Ovary (tissue), 10 donors: ENCODE measurements at regions of chr9 and their contacts with region 1.

Region 1: GRCh38 chr9:32968101-32969011 is 33.1 kb downstream of the APTX start:
- DNase-seq: peak; percentile 41 to 72 (median 67)
- H3K4me3 ChIP-seq: no peak overlapping the region
- H3K27ac ChIP-seq: no peak overlapping the region
- H3K4me1 ChIP-seq: peaks cover 3% of the 10 kb centered on the region
- H3K27me3 ChIP-seq: no peaks in the 10 kb centered on the region
- CTCF ChIP-seq: peak; percentile 70 to 79 (median 70)
- EP300 ChIP-seq: no peak
- POLR2A ChIP-seq: no peak

Region 2: GRCh38 chr9:32378993-32379729 is 589.2 kb before region 1 on chr9:
- intact Hi-C with region 1: loop called (anchors 5 kb)
- DNase-seq: peak in 3 of 5 donors; percentile 35 to 59 (median 41)
- H3K4me3 ChIP-seq: no peak overlapping the region
- H3K27ac ChIP-seq: no peak overlapping the region
- H3K4me1 ChIP-seq: peaks cover 1% of the 10 kb centered on the region
- H3K27me3 ChIP-seq: no peaks in the 10 kb centered on the region
- CTCF ChIP-seq: peak; percentile 53 to 87 (median 82)
- EP300 ChIP-seq: no peak
- POLR2A ChIP-seq: no peak

Region 3: GRCh38 chr9:32384364-32385151 is 583.8 kb before region 1 on chr9 and contains the start of gene ACO1:
- intact Hi-C with region 1: loop called (anchors 5 kb)
- DNase-seq: peak; percentile 89 to 95 (median 94)
- H3K4me3 ChIP-seq: peak within 1 kb of the TSS; percentile 90
- H3K27ac ChIP-seq: peak within 1 kb of the TSS; percentile 47 to 71
- H3K4me1 ChIP-seq: peaks cover 8% of the 10 kb centered on the region
- H3K27me3 ChIP-seq: no peaks in the 10 kb centered on the region
- CTCF ChIP-seq: no peak
- EP300 ChIP-seq: no peak
- POLR2A ChIP-seq: peak; percentile 83
- total RNA-seq, gene ACO1: 21.8 to 46.3 (median 30.5) TPM

Region 4: DNA sequence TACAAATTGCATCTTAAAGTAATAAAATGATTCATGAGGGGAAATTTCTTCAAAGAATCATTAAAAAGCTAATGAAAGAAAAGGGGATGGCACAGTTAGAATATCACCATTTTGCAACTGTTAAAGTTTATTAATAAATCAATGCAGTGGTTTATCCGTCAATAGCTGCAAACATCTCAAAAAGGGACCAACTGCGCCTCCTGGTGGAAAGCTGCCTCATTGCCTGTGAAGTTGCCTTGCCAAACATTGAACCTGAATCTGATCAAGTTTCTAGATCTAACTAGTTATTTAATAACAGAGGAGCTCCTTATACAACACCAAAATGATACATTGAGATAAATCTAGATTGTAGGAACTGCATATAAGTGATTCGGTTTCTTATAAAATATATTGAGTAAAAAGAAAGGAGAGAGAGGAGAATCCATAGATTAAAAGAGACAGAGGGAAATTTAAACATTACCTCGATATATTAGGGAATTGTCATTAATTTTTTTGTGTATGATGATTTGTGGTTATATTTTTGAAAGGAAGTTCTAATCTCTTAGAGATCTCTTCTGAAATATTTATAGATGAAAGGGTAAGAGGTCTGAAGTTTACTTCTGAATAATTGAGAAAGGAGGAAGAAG is 388.5 kb before region 1 on chr9:
- intact Hi-C with region 1: loop called (anchors 5 to 10 kb)
- DNase-seq: peak; percentile 48 to 77 (median 76)
- H3K4me3 ChIP-seq: no peak overlapping the region
- H3K27ac ChIP-seq: no peak overlapping the region
- H3K4me1 ChIP-seq: no peaks in the 10 kb centered on the region
- H3K27me3 ChIP-seq: no peaks in the 10 kb centered on the region
- CTCF ChIP-seq: peak; percentile 49 to 76 (median 76)
- EP300 ChIP-seq: no peak
- POLR2A ChIP-seq: no peak

Region 5: GRCh38 chr9:32589083-32589723 is 379.2 kb before region 1 on chr9:
- intact Hi-C with region 1: loop called (anchors 5 to 10 kb)
- DNase-seq: no peak
- H3K4me3 ChIP-seq: no peak overlapping the region
- H3K27ac ChIP-seq: no peak overlapping the region
- H3K4me1 ChIP-seq: no peaks in the 10 kb centered on the region
- H3K27me3 ChIP-seq: no peaks in the 10 kb centered on the region
- CTCF ChIP-seq: peak in 1 of 3 donors; percentile 13
- EP300 ChIP-seq: no peak
- POLR2A ChIP-seq: no peak

Region 6: GRCh38 chr9:32906213-32906612 is 62.1 kb before region 1 on chr9:
- intact Hi-C with region 1: no loop called
- DNase-seq: no peak
- H3K4me3 ChIP-seq: no peak overlapping the region
- H3K27ac ChIP-seq: no peak overlapping the region
- H3K4me1 ChIP-seq: no peaks in the 10 kb centered on the region
- H3K27me3 ChIP-seq: no peaks in the 10 kb centered on the region
- CTCF ChIP-seq: no peak
- EP300 ChIP-seq: no peak
- POLR2A ChIP-seq: no peak

Region 7: DNA sequence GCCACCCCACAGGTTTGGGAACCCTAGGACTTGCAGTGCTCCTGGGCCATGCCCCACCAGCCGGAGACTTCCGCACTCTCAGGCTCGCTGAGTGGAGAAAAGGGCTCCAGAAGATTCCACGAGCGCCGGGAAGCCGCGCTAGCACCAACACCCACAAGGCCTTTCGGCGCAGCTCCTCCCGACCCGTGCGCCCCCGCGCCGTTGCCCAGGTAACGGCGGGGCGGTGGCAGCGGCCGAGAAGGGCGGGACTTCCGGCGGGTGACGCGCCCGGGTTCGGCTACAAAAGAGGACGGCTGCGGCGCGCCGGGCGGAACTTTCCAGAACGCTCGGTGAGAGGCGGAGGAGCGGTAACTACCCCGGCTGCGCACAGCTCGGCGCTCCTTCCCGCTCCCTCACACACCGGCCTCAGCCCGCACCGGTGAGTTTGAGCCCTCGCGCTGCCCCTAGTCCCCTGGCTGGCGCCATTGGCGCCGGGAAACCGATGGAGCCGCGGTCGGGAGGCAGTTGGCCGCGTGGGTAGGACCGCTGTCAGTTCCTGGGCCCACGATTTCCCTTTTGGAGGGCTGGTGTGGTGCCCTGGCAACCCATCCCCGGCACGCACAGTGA is 56.7 kb after region 1 on chr9 and contains the start of gene DNAJA1:
- intact Hi-C with region 1: no loop called
- DNase-seq: peak; percentile 93 to 97 (median 95)
- H3K4me3 ChIP-seq: peak within 1 kb of the TSS; percentile 89
- H3K27ac ChIP-seq: peak within 1 kb of the TSS; percentile 99
- H3K4me1 ChIP-seq: peaks cover 5% of the 10 kb centered on the region
- H3K27me3 ChIP-seq: no peaks in the 10 kb centered on the region
- CTCF ChIP-seq: peak in 1 of 3 donors; percentile 15
- EP300 ChIP-seq: peak; percentile 41
- POLR2A ChIP-seq: peak; percentile 95
- total RNA-seq, gene DNAJA1: 66.1 to 156 (median 112) TPM